MCF 10A (cell line): ENCODE measurements at regions of chr5 and their contacts with region 1.

Region 1: GRCh38 chr5:82225525-82226172 is 52.5 kb downstream of the RPS23 start:
- DNase-seq: peak; percentile 75
- H3K4me3 Mint-ChIP-seq: no peak overlapping the region
- H3K27ac Mint-ChIP-seq: no peak overlapping the region
- H3K4me1 Mint-ChIP-seq: peaks cover 12% of the 10 kb centered on the region
- H3K27me3 Mint-ChIP-seq: no peaks in the 10 kb centered on the region
- CTCF ChIP-seq: peak; percentile 85

Region 2: GRCh38 chr5:81425569-81425968 is 800.1 kb before region 1 on chr5:
- CTCF ChIA-PET with region 1: interaction called, 3 read pairs
- POLR2A ChIA-PET with region 1: no interaction called
- intact Hi-C with region 1: loop called (anchors 1 kb)
- DNase-seq: peak; percentile 49
- H3K4me3 Mint-ChIP-seq: no peak overlapping the region
- H3K27ac Mint-ChIP-seq: peak overlapping the region; percentile 16
- H3K4me1 Mint-ChIP-seq: peaks cover 16% of the 10 kb centered on the region
- H3K27me3 Mint-ChIP-seq: no peaks in the 10 kb centered on the region
- CTCF ChIP-seq: peak; percentile 51

Region 3: DNA sequence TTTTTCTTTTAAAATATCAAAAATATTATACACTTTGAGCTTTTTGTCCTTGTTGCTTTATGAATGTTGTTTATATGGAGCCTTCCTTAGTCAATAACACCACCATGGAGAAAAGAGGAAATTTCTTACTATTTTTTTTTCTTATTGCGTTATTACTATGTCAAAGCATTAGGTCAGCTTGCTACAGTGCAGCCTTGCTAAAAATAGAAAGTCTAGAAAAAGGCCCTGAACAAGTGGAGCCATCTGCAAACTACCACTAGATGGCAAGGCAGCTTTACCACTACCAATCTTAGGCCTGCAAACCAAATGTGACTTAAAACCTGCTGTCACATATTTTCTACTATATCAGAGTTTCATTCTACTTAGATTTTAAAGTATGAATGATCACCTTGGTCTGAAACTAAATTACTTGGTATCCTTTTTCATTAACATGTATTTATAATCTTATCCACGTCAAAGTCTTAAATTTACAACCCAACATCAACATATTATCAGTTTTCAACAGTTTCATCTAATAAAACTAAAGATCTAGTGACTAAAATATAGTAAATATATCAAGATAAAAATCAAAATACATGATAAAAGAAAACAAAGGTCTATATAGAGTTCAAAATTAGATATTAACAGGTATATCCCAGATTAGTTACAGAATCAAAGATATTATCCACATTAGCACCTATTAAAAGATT is 718.6 kb before region 1 on chr5:
- CTCF ChIA-PET with region 1: interaction called, 4 read pairs
- POLR2A ChIA-PET with region 1: no interaction called
- intact Hi-C with region 1: loop called (anchors 1 kb)
- DNase-seq: peak; percentile 79
- H3K4me3 Mint-ChIP-seq: no peak overlapping the region
- H3K27ac Mint-ChIP-seq: no peak overlapping the region
- H3K4me1 Mint-ChIP-seq: no peaks in the 10 kb centered on the region
- H3K27me3 Mint-ChIP-seq: no peaks in the 10 kb centered on the region
- CTCF ChIP-seq: peak; percentile 73

Region 4: DNA sequence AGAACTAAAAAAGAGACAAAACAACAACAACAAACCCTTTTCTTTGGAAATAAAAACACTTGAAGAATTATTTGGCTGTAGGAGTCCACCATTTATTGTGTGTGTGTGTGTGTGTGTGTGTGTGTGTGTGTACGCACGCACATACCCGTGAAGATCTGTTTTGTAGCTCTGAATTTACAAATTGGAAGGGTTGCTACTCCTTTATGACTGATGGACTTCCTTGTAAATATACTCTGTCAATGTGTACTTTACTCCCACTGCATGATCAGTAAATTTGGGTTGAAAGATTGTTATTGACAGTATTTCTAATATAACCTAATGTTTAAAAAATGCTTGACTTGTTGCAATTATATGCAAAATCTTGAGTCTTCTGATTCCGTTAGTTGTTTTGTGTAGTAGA is 105.8 kb before region 1 on chr5:
- CTCF ChIA-PET with region 1: no interaction called
- POLR2A ChIA-PET with region 1: no interaction called
- intact Hi-C with region 1: no loop called
- DNase-seq: no peak
- H3K4me3 Mint-ChIP-seq: no peak overlapping the region
- H3K27ac Mint-ChIP-seq: no peak overlapping the region
- H3K4me1 Mint-ChIP-seq: peaks cover 4% of the 10 kb centered on the region
- H3K27me3 Mint-ChIP-seq: no peaks in the 10 kb centered on the region
- CTCF ChIP-seq: no peak

Region 5: GRCh38 chr5:82174128-82174918 is 51.3 kb before region 1 on chr5:
- CTCF ChIA-PET with region 1: interaction called, 17 read pairs
- POLR2A ChIA-PET with region 1: interaction called, 3 read pairs
- intact Hi-C with region 1: loop called (anchors 1 kb)
- DNase-seq: peak; percentile 74
- H3K4me3 Mint-ChIP-seq: no peak overlapping the region
- H3K27ac Mint-ChIP-seq: no peak overlapping the region
- H3K4me1 Mint-ChIP-seq: no peaks in the 10 kb centered on the region
- H3K27me3 Mint-ChIP-seq: no peaks in the 10 kb centered on the region
- CTCF ChIP-seq: peak; percentile 56

Region 6: GRCh38 chr5:82183828-82184227 is 41.8 kb before region 1 on chr5:
- CTCF ChIA-PET with region 1: interaction called, 13 read pairs
- POLR2A ChIA-PET with region 1: no interaction called
- intact Hi-C with region 1: no loop called
- DNase-seq: peak; percentile 80
- H3K4me3 Mint-ChIP-seq: no peak overlapping the region
- H3K27ac Mint-ChIP-seq: peak overlapping the region; percentile 27
- H3K4me1 Mint-ChIP-seq: peaks cover 15% of the 10 kb centered on the region
- H3K27me3 Mint-ChIP-seq: no peaks in the 10 kb centered on the region
- CTCF ChIP-seq: no peak